Activated naive CD4-positive, alpha-beta T cell treated with anti-CD3 and anti-CD28 coated beads for 36 hours (primary cell): ENCODE measurements at regions of chr17 and their contacts with region 1.

Region 1: GRCh38 chr17:43314611-43315011 is 80.8 kb upstream of the RNU2-1 start:
- DNase-seq: no peak
- H3K4me3 Mint-ChIP-seq: no peak overlapping the region
- H3K27ac Mint-ChIP-seq: no peak overlapping the region
- H3K4me1 Mint-ChIP-seq: peaks cover 20% of the 10 kb centered on the region
- H3K27me3 Mint-ChIP-seq: no peaks in the 10 kb centered on the region

Region 2: DNA sequence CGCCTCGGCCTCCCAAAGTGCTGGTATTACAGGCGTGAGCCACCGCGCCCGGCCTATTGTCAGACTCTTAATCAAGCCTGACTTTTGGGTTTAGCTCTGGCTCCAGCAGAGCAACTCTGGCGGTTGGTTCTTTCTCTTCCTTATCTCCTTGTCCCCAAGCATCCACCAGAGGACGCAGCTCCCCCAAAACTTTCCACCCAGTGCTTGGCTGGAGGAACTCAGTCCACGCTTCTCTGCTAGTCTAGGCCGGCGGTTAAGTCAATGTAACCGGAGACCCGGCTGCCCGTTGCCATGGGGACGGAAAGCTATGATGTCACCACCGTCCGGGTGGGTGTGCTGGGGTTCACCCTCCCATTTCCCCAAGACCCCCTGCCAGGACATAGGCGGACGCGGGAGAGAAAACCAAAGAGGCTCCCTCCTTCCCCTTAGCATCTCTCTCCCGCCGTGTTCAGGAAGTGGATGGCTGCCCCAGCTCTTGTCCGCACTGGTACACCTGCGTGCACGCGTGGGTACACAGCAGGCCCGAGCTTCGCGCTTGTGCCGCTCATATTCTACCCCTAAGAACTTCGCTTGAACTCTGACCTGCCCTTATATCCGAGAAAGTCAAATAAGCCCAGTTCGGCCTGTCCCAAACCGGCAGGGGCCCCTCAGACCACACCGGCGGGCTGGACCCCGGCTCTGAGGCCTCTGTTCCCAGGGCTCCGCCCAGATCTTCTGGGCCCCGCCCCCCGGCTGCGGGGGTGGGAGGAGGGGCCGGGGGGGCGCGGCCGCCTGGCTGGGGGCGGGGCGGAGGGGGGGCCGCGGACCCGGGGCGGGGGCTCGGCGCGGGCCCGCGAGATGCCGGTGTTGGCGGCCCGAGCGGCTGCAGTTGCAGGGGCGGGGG is 290.0 kb before region 1 on chr17 and contains the start of gene RND2:
- CTCF ChIA-PET with region 1: interaction called, 3 read pairs
- intact Hi-C with region 1: loop called (anchors 1 kb)
- DNase-seq: peak; percentile 90
- H3K4me3 Mint-ChIP-seq: peak within 1 kb of the TSS; percentile 80
- H3K27ac Mint-ChIP-seq: no peak within 1 kb of the TSS
- H3K4me1 Mint-ChIP-seq: peaks cover 24% of the 10 kb centered on the region
- H3K27me3 Mint-ChIP-seq: no peaks in the 10 kb centered on the region
- total RNA-seq, gene RND2: not detected

Region 3: DNA sequence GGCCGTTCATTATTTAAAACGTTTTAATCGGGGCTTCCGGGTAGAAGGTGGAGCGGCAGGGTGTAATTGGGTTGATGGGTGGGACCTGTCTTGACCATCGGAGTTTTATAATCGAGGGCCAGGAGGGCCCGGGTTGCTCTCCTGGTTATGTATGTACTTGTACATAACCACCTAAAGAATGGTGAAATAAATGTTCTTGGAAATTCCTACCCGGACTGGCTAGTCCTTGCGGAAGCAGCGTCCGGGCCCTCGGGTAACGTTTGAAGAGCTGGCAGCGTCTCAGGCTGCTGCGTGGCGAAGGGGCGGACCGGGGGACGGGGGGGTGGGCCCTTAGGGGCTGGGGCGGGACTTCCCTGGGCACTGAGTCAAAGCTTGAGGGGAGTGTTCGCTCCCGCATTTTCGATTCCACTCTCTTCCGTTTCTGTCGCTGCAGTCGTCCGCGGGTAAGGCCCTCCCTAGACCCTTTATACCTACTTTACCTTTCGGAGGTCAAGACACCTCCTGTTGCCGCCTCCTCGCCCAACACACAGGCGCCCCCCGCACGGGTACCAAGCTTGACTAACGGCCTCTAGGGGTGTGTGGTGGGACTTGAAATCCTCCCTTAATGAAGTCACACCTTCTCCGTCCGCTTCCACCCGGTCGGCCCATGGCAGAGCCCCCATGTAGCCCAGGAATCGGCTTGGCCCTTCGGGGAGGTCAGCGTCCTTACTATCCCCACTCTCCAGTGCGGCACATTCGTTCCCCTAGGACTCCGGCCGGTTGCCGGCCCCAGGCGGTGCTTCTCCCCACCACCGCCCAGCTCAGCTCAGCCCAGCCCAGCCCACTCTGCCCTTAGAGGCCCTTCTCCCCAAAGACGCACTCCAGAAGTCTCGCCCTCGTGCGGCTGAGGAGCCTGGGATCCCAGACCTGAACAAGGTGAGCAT is 102.9 kb before region 1 on chr17 and contains the start of gene TMEM106A:
- CTCF ChIA-PET with region 1: interaction called, 3 read pairs
- intact Hi-C with region 1: loop called (anchors 1 kb)
- DNase-seq: peak; percentile 82
- H3K4me3 Mint-ChIP-seq: peak within 1 kb of the TSS; percentile 94
- H3K27ac Mint-ChIP-seq: peak within 1 kb of the TSS; percentile 90
- H3K4me1 Mint-ChIP-seq: peaks cover 26% of the 10 kb centered on the region
- H3K27me3 Mint-ChIP-seq: no peaks in the 10 kb centered on the region
- total RNA-seq, gene TMEM106A: 5.8 to 7.1 TPM

Region 4: DNA sequence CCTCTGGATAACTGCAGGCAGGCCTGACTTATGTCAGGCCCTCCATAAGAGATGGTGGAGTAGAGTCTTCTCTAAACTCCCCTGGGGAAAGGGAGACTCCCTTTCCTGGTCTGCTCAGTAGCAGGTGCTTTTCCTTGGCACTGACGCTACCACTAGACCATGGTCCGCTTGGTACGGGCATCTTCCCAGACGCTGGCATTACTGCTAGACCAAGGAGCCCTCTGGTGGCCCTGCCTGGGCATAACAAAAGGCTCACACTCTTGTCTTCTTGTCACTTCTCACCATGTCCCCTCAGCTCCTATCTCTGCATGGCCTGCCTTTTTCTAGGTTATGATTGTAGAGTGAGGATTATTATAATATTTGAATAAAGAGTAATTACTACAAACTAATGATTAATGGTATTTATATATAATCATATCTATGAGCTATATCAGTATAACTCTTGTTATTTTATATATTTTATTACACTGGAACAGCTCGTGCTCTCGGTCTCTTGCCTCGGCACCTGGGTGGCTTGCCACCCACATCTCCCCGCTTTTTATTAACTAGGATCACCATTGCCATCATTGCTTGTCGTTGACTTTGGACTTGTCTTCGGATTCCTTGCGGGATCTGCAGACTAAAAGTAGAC is 24.4 kb after region 1 on chr17:
- CTCF ChIA-PET with region 1: no interaction called
- intact Hi-C with region 1: no loop called
- DNase-seq: peak; percentile 82
- H3K4me3 Mint-ChIP-seq: no peak overlapping the region
- H3K27ac Mint-ChIP-seq: no peak overlapping the region
- H3K4me1 Mint-ChIP-seq: peaks cover 31% of the 10 kb centered on the region
- H3K27me3 Mint-ChIP-seq: no peaks in the 10 kb centered on the region